ENCODE measurements at regions of chr12 and their contacts with region 1.

Region 1: DNA sequence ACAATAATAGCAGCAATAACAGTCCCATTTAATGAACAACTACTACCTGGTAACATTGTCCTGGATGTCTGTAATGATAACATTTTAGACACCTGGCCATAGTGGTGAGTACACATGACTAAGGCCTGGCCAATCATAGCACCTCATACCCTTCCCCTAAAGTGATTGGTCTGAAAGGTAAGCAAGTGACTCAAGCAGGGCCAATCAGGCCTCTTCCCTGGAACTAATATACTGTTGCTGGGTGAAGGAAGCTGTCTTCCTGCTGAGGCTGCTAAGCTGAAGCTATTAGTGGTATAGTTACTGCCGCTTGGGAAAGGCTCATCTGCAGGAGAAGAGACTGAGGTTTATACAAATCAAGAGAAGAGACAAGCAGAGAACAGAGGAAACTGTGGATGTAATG is 18.7 kb upstream of the NOS1 start:
- DNase-seq: no peak

Region 2: GRCh38 chr12:117412465-117413188 is 32.5 kb after region 1 on chr12:
- intact Hi-C with region 1: no loop called
- DNase-seq: no peak

Region 3: GRCh38 chr12:117439531-117440001 is 59.5 kb after region 1 on chr12:
- intact Hi-C with region 1: loop called in 1 of 2 experiments (anchors 2 kb)
- DNase-seq: no peak